GM13976 (cell line): ENCODE measurements at regions of chr16 and their contacts with region 1.

Region 1: GRCh38 chr16:69123910-69124309 is 8.5 kb downstream of the CHTF8 start:
- DNase-seq: peak; percentile 69
- CTCF ChIP-seq: peak; percentile 52

Region 2: DNA sequence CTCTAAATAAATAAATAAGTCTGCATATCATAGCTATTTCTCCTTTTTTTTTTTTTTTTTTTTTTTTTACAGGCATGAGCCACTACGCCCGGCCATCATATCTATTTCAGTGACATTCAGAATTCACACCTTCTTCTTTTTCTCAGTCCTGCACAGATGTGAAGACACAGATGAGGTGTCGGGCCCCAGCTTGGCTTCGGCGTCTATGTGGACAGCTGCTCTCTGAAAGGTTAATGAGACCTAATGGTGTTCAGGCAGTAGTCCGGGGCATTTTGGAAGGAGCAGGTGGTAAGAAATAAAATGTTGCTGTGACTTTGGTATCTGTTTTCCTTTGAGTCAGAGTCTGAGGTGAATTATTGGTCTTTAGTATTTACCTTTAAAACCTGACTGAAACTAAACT is 257.0 kb before region 1 on chr16:
- in situ Hi-C with region 1: loop called (anchors 25 kb)
- DNase-seq: no peak
- CTCF ChIP-seq: no peak

Region 3: GRCh38 chr16:69417520-69418199 is 293.8 kb after region 1 on chr16:
- in situ Hi-C with region 1: no loop called
- DNase-seq: no peak
- CTCF ChIP-seq: no peak